GM10248 (cell line): ENCODE measurements at regions of chr7 and their contacts with region 1.

Region 1: DNA sequence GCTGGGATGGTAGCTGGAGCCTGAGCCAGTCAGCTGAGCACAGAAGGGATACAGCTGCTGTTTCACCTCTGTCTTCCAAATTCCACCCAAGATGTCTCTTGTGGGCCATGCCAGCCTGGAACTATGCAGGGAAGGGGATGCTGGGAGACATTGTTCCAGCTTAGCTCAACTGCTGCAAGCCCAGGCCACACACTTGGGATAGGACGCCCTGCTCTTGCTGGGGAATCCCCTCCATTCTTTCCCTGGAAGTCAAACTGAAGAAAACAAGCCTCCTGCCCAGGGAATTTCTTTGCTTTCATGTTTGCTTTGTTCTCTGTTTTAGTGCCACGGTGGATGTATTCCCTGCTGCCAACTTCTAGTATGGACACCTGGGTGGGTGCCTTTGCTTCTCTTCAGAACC is 55.2 kb upstream of the CDK13 start:
- DNase-seq: no peak
- CTCF ChIP-seq: no peak

Region 2: DNA sequence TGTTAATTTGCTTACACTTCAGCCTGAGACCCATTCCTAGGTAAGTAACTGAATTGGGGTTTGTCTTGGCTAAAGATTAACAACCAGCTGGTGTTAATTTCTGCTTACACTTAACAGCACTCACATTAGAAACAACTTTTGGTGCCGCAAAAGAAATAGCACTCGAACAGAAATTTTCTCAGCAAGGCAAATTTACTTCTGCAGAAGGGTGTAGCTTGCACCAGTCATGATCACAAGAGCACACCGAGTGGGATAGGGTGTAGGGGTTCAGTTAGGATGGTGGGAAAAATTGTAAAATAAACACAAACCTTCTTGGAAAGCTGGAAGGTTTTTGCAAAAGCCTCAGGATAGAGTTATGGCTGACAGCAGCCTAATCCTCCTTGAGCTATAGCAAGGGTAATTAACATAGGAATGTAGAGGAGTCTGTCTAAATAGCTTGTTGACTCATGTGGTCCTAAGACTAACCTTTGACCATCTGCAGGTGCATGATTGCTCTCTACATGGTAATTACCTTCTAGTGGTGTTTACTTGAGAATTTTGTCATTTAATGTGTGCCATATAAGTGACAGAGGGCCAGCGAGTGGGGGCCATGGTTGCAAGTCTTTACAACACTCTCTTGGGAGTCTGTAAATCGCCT is 12.6 kb before region 1 on chr7:
- CTCF ChIA-PET with region 1: interaction called, 32 read pairs
- POLR2A ChIA-PET with region 1: no interaction called
- DNase-seq: no peak
- CTCF ChIP-seq: no peak

Region 3: DNA sequence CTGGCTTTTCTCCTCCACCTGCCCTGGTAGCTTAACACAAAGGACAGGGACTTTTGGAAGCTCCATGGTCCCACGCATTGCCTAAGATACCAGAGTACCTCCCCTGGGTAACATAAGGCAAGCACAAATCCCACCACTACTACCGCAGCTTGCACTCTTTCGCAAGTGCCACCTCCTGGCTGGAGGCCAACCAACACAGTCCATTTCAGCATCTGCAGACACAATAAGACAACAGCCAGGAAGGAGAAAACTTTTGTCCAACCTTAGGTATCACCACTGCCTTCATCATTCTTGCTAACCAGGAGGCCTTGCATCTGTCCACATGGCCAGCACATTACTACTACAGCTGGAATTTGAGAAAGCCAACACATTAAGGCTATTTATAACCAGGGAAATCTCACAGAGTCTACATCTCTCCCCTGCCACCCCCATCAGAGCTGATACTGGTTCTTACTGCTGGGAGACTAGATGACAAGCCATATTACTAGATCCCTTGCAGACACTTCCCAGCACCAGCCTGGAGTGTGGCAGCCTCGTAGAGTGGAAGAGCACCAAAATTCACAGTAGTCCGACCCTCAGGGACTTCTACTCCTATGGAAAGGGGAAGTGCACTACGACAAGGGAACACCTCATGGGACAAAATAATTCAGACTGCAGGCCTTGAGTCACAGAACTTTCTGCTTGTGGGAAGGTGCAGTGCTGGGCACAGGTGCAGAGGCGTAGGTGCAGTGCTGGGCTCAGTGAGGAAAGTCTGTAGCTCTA is 15.4 kb after region 1 on chr7:
- CTCF ChIA-PET with region 1: interaction called, 19 read pairs
- POLR2A ChIA-PET with region 1: no interaction called
- DNase-seq: no peak
- CTCF ChIP-seq: no peak

Region 4: GRCh38 chr7:40047661-40048060 is 152.8 kb after region 1 on chr7:
- CTCF ChIA-PET with region 1: interaction called, 170 read pairs
- POLR2A ChIA-PET with region 1: no interaction called
- DNase-seq: no peak
- CTCF ChIP-seq: no peak

Region 5: DNA sequence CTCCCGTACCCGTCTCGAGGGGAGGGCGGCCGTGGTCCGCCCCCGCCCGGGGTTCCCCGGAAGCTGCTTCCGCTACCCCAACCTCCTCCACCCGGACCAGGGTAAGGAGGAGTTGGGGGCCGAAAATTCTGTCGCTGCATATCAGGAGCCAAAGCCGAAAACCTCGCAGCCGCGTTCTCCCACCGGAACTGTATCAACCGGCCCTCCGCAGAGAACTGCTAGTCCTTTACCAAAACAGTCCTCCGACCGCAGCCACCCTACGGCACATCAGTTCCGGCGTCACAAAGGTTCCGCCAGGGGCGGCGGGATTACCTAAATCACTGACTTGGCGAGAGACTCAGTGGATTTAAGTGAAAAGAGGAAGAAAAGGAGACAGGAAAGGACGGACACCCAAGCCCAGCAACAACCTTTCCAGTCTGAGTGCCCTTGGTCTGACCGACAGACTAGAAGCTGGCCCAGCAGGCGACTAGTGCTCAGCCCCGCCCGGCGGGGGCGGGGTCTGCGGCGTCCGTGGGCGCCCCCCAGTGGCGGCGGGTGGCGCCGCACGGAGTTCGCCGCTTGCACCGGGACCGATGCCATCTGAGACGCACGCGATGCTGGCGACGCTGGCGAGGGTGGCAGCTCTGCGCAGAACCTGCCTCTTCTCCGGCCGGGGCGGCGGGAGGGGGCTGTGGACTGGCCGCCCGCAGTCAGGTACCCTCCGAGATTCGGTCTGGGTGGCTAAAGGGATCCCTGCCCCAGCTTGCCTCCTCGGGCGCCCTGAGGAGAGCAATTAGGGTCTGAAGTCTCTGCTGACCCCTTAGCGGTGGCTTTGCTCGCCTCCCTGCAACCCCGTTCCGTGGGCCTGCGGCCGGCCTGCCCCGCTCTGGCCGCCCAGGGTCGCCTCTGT is 239.8 kb after region 1 on chr7 and contains the starts of genes MPLKIP and SUGCT:
- CTCF ChIA-PET with region 1: interaction called, 20 read pairs
- POLR2A ChIA-PET with region 1: no interaction called
- DNase-seq: peak; percentile 94
- CTCF ChIP-seq: peak; percentile 93